ENCODE measurements at regions of chr5 and their contacts with region 1.

Region 1: DNA sequence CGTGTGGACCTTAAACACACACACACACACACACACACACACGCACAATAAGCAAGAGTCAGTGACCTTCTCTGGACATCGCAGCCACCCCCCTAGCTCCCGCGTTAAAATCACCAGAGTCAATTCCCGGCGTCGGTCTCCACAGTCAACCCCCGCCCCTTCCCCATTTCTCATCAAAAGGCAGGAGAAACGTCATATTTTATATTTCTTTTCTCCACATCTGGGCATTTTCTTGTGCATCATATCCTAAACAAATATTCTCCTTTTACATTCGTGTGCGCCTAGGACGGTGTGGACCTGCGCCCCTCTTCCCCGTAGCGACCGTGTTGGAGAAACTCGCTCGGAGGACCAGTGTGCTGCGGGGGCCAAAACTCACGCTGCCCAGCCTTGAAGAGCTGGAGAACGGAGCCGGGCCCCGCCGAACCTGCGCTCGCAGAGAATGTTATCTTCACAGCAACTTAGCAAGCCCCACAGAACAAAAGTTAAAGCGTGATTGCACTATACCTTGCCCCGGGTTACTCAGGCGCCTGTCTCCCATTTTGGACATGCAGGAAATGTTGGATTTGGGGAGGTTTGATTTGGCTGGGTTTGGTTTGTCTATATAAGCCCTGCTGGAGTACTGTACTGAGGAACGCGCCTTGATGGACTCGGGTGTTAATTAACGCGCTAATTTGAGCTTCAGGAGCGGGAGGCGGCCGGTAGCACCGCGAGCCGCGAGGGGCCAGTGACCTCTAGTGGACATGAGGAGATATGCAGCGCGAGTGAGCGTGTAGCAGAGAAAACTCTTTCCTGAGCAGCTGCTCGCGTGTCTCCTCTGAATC is 192.4 kb downstream of the MEF2C start:
- DNase-seq: peak; percentile 81
- CTCF ChIP-seq: peak; percentile 97

Region 2: GRCh38 chr5:87588316-87588715 is 1102.3 kb before region 1 on chr5:
- CTCF ChIA-PET with region 1: no interaction called
- POLR2A ChIA-PET with region 1: no interaction called
- DNase-seq: no peak
- CTCF ChIP-seq: no peak

Region 3: DNA sequence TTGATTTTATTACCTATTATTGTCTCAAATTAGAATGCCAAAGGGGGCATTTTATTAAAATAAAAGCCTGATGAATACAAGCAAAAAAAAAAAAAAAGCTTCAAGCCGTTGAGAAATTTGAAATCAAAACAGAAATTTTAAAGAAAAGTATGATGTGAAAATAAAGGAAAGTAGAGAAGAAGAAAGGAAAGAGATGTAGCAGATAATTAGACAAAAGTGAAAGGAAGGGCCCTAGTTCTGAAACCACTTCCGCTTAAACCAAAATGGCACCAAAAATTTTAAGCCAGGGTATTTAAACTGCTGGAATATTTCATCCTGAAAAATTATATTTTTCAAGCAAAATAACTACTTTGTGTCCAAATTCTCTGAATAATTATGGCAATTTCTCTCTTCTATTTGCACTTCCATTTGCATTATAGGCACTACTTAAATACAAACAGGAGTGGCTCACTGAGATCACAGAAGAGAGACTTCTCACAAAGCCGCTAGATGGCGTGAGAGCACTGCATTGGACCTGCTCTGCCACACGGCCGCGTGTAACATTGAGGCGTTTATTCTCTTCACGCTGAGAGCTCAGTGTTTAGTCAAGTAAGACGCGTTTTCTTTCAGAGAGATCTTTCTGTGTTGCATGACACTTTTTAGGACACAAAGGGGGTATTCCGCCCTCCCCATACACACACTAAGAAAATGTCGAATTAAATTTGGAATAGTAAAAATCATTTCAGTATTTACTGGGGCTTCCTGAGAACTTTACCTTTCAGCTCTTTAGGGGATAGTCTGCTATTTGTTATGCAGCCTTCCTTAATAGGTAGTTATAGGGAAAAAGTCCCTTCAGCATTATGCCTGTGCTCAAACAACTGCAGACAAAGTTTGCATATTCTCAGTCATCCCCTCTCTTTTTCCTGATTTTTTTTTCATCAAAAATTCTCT is 909.5 kb before region 1 on chr5:
- CTCF ChIA-PET with region 1: interaction called, 69 read pairs
- POLR2A ChIA-PET with region 1: no interaction called
- DNase-seq: peak; percentile 35
- CTCF ChIP-seq: peak; percentile 91

Region 4: DNA sequence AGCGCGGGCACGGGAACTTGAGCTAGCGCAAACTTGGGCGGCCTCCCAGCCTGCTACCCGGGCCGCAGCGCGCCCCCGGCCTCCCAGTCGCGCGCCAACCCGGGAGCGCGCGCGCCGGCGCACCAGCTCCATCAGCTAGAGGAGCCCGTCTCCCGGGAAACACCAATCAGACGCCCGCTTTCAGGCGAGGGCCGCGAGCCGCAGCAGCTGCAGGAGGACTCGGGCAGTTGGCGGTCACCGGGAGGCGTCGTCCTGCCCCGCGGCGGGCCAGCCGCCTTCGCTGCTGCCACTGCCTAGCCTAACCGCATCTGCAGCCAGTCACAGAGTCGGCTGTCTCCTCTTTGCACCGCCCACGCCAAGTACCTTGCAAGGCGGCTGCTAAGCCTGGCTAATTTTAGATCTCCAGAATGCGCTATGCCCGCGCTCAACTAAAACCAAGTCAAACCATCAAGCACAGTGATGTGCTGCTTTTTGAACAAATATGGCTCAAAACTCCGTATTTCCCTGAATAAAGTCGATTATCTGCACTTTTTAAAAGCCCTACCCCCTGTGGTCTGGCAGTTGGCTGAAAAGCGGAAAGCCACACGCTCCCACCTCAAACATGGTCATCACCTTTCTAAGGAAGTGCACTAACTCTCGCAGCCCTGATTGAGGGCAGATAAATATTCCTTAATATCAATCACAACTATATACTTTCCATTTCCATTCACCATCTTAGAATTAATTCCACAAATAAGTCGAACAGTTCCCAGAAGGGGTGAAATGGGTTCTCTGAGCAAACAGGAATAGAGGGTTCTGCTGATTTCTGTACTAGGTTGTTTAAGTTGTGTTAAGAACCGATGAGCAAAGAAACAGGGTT is 29.4 kb before region 1 on chr5:
- CTCF ChIA-PET with region 1: interaction called, 47 read pairs
- POLR2A ChIA-PET with region 1: no interaction called
- DNase-seq: peak; percentile 83
- CTCF ChIP-seq: no peak

Region 5: GRCh38 chr5:88680253-88681132 is 10.1 kb before region 1 on chr5:
- CTCF ChIA-PET with region 1: interaction called, 74 read pairs
- POLR2A ChIA-PET with region 1: no interaction called
- DNase-seq: peak; percentile 86
- CTCF ChIP-seq: peak; percentile 95

Region 6: DNA sequence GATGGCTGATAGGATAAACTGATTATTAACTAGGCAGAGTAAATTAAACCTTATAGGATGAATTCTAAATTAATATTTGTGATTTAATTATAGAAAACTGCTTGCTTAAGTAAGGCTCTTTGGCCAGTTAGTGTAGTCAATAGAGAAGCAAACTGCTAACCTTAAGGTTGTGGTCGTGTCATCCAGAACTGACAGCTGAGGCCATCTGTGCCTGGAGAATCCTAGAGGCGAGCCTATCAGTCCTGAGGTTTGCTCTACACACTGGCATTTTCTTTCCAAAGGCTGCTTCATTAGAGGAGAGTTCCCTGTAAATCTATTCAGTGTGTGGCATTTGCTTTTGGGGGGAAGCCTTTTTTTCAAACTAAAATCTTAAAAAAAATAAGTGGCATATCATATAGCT is 23.2 kb after region 1 on chr5:
- CTCF ChIA-PET with region 1: interaction called, 11 read pairs
- POLR2A ChIA-PET with region 1: no interaction called
- DNase-seq: no peak
- CTCF ChIP-seq: no peak

Region 7: DNA sequence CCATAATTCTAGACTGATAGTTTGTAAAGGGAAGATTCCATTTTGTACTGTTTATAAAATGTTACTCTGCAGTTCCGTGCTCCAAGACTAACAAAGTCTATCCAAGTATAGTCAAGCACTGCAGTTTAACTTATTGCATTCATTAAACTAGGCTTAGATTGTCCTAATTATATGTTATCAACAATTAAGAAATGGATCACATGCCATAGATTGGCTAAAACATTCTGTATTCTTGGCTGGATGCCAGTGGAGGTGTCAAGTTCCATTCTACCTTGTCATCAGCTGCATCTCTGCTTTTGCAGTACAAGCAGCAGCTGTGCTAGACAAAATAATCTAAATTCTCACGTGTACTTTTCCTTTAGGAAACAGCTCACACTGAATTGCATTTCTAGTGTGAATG is 261.7 kb after region 1 on chr5:
- CTCF ChIA-PET with region 1: no interaction called
- POLR2A ChIA-PET with region 1: no interaction called
- DNase-seq: no peak
- CTCF ChIP-seq: no peak